Activated CD8-positive, alpha-beta T cell treated with anti-CD3 and anti-CD28 coated beads, Interleukin-2, amount 10 ng/mL, durations not matched to agents 7 days and 5 days (primary cell): ENCODE measurements at regions of chr9 and their contacts with region 1.

Region 1: GRCh38 chr9:94672811-94673487 is 33.6 kb upstream of the FBP1 start:
- DNase-seq: no peak
- ATAC-seq: no peak
- H3K4me3 Mint-ChIP-seq: no peak overlapping the region
- H3K27ac Mint-ChIP-seq: no peak overlapping the region
- H3K4me1 Mint-ChIP-seq: peaks cover 10% of the 10 kb centered on the region
- H3K27me3 Mint-ChIP-seq: peaks cover 9% of the 10 kb centered on the region

Region 2: DNA sequence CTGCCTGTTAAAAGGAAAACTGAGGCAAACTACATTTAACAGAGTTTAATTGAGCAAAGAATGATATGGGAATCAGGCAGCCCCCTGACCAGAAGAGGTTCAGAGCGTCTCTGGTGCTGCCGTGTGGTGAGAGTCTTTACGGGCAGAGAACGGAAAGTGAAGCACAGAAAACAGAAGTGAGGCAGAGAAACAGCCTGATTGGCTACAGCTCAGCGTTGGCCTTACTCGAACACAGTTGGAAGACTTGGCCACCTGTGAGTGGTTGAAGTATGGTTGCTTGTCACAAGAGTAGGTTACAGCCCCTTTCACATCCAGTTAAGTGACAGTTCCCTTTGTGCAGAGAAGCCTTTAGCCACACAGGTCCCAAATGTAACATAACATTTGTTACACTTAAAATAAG is 16.7 kb before region 1 on chr9:
- CTCF ChIA-PET with region 1: interaction called, 22 read pairs
- POLR2A ChIA-PET with region 1: interaction called, 10 read pairs
- DNase-seq: peak; percentile 62
- ATAC-seq: peak; percentile 94
- H3K4me3 Mint-ChIP-seq: peak overlapping the region; percentile 54
- H3K27ac Mint-ChIP-seq: peak overlapping the region; percentile 66
- H3K4me1 Mint-ChIP-seq: peaks cover 19% of the 10 kb centered on the region
- H3K27me3 Mint-ChIP-seq: peaks cover 8% of the 10 kb centered on the region

Region 3: GRCh38 chr9:94717761-94718160 is 44.8 kb after region 1 on chr9:
- CTCF ChIA-PET with region 1: no interaction called
- POLR2A ChIA-PET with region 1: no interaction called
- DNase-seq: no peak
- ATAC-seq: no peak
- H3K4me3 Mint-ChIP-seq: no peak overlapping the region
- H3K27ac Mint-ChIP-seq: no peak overlapping the region
- H3K4me1 Mint-ChIP-seq: no peaks in the 10 kb centered on the region
- H3K27me3 Mint-ChIP-seq: peaks cover 15% of the 10 kb centered on the region